ENCODE measurements at regions of chr1 and their contacts with region 1.

Region 1: DNA sequence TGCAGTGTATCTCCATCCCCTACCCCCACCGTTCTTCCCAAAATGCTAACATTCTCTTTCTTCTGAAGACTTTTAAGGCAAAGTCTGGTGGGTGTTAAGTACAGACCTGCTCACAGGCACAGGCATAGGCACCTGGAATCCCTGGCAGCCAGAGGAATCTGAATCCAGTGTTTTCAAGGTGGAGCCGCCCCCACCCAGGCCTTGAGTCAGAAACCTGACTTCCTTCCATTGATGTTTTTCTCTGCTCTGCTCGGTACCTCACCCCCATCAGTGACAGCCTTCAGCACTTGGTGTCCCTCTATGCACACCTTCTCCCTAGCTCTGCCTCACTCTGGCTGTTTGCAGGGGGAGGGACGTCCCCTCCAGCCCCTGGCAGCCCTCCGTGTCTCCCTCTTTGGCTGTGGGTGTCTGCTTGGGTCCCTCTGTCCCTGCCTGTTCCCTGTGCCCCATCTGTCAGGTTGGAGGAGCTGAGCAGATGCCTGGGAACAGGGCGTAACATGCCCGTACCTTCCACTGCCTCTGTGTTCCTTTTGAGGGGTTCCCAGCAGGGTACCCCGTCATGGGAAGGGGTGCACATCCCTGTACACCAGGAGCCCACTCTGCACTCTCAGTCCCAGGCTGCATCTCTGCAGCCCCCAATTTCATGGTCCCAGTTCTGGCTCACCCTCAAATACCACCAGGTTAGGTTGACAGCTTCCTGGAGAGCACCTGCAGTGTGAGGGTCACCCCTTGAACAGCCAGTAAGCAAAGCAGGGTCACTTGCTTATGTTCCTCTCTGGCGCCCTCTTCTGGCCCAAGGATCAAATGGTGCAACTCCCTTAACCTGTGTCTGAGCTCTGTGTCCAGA is 6.7 kb downstream of the NCDN start:
- DNase-seq: peak; percentile 90
- ATAC-seq: peak; percentile 80
- H3K4me3 Mint-ChIP-seq: no peak overlapping the region
- H3K27ac Mint-ChIP-seq: no peak overlapping the region
- H3K4me1 Mint-ChIP-seq: peaks cover 14% of the 10 kb centered on the region
- H3K27me3 Mint-ChIP-seq: no peaks in the 10 kb centered on the region

Region 2: DNA sequence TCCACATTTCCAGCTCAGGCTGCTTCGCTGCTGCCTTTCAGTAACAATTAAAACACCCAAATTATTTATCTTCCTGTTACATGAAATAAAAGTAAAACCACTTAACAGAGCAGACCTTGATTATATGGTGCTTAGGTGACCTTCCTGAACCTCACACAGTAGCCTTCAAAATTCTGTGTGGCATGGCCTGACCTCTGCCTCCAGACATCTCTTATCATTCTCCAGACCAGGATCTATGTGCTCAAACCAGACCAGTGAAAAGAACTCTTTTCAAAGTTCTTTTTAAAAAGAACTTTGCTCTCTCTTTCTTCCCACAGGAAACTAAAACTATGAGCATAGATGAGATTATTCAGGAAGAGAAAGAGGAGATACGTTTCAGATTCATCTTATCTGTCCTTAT is 44.8 kb before region 1 on chr1:
- CTCF ChIA-PET with region 1: no interaction called
- DNase-seq: no peak
- ATAC-seq: no peak
- H3K4me3 Mint-ChIP-seq: no peak overlapping the region
- H3K27ac Mint-ChIP-seq: no peak overlapping the region
- H3K4me1 Mint-ChIP-seq: no peaks in the 10 kb centered on the region
- H3K27me3 Mint-ChIP-seq: no peaks in the 10 kb centered on the region

Region 3: GRCh38 chr1:35544978-35545377 is 19.3 kb before region 1 on chr1:
- CTCF ChIA-PET with region 1: interaction called, 11 read pairs
- DNase-seq: peak; percentile 67
- ATAC-seq: peak; percentile 88
- H3K4me3 Mint-ChIP-seq: no peak overlapping the region
- H3K27ac Mint-ChIP-seq: no peak overlapping the region
- H3K4me1 Mint-ChIP-seq: peaks cover 32% of the 10 kb centered on the region
- H3K27me3 Mint-ChIP-seq: no peaks in the 10 kb centered on the region

Region 4: GRCh38 chr1:35585281-35585680 is 21.0 kb after region 1 on chr1:
- CTCF ChIA-PET with region 1: interaction called, 12 read pairs
- DNase-seq: no peak
- ATAC-seq: no peak
- H3K4me3 Mint-ChIP-seq: no peak overlapping the region
- H3K27ac Mint-ChIP-seq: no peak overlapping the region
- H3K4me1 Mint-ChIP-seq: no peaks in the 10 kb centered on the region
- H3K27me3 Mint-ChIP-seq: no peaks in the 10 kb centered on the region

Region 5: DNA sequence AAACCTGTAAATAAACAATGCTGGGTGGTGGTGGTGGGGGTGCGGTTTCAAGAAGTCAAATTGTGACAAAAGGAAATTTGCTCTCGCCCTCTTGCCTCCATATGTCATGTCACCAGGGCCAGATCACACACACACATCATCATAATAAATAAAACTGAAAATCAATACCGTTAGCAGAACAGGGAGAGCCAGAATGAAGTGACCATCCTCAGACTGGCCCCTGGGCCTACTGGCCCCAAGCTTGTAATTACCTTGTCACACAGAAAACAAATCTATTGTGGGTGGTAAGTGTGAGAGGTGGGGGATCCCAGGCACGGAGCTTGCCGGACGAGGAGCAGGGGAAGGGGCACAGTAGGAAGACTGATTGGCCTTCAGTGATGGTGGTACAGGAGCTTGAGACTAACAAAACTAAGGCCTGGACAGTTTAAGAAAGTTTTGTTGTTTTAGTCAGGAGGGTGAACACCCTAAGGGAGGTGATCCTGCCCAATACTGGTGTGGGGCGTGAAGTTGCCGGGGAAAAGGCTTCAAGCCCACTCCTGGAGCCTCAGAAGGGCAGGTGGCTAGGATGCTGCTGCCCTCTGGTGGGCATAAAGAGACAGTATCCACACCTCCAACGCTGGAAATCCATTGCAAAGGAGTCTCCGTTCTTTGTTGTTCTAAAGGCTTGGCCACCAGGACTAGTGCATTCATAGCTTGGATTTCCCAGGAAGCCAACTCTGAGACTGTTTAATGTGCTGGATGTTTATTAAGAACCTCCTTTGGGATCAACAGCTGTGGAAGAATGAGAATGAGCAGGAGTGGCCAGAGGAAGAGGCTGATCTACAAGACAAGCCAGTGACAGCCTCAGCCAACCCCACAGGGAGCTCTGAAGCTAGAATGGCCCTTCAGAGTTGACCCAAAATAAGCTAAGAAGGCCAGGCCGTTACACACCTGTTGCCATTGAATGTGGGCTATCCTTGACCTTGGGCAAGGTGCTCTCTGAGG is 162.5 kb after region 1 on chr1:
- CTCF ChIA-PET with region 1: interaction called, 53 read pairs
- DNase-seq: peak; percentile 55
- ATAC-seq: peak; percentile 90
- H3K4me3 Mint-ChIP-seq: no peak overlapping the region
- H3K27ac Mint-ChIP-seq: peak overlapping the region; percentile 35
- H3K4me1 Mint-ChIP-seq: no peaks in the 10 kb centered on the region
- H3K27me3 Mint-ChIP-seq: no peaks in the 10 kb centered on the region

Region 6: GRCh38 chr1:35777109-35777508 is 212.8 kb after region 1 on chr1:
- CTCF ChIA-PET with region 1: interaction called, 16 read pairs
- DNase-seq: no peak
- ATAC-seq: no peak
- H3K4me3 Mint-ChIP-seq: no peak overlapping the region
- H3K27ac Mint-ChIP-seq: no peak overlapping the region
- H3K4me1 Mint-ChIP-seq: peaks cover 18% of the 10 kb centered on the region
- H3K27me3 Mint-ChIP-seq: no peaks in the 10 kb centered on the region